ENCODE measurements at regions of chr3 and their contacts with region 1.

Region 1: DNA sequence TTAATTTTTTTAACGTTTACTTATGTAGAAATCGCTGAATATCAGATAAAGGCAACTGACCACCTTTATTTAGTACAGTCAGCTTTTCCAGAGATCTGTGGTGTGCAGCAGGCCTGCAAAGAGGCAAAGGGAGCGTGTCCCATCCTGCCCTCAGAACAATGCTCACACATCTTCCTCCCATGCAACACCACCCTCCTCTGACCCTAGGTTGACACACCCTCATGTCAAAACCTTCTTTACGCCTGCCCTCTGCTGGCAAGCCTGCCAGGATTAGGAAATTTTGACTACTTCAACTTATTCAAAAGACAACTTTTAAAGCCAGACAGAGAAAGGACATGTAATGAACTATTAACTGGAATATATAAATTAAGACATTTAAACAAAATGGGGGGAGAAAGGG is 513.7 kb downstream of the FOXP1 start:
- DNase-seq: peak; percentile 51
- H3K4me3 ChIP-seq: no peak overlapping the region
- H3K27ac ChIP-seq: peak overlapping the region; percentile 37
- H3K4me1 ChIP-seq: peaks cover 70% of the 10 kb centered on the region
- H3K27me3 ChIP-seq: no peaks in the 10 kb centered on the region
- CTCF ChIP-seq: peak; percentile 67

Region 2: GRCh38 chr3:71006810-71007785 is 62.7 kb before region 1 on chr3:
- intact Hi-C with region 1: loop called (anchors 5 kb)
- DNase-seq: no peak
- H3K4me3 ChIP-seq: no peak overlapping the region
- H3K27ac ChIP-seq: peak overlapping the region; percentile 45
- H3K4me1 ChIP-seq: peaks cover 58% of the 10 kb centered on the region
- H3K27me3 ChIP-seq: no peaks in the 10 kb centered on the region
- CTCF ChIP-seq: peak; percentile 63

Measured in left ventricle myocardium inferior (tissue), 1 donor.